GM12878 (cell line): ENCODE measurements at regions of chr3 and their contacts with region 1.

Region 1: GRCh38 chr3:155854141-155854940 is at the start of gene SLC33A1:
- DNase-seq: peak; percentile 97
- ATAC-seq: peak; percentile 95
- H3K4me3 ChIP-seq: peak within 1 kb of the TSS; percentile 84
- H3K27ac ChIP-seq: peak within 1 kb of the TSS; percentile 93
- H3K4me1 ChIP-seq: no peaks in the 10 kb centered on the region
- H3K27me3 ChIP-seq: no peaks in the 10 kb centered on the region
- CTCF ChIP-seq: no peak
- EP300 ChIP-seq: 0 out of 4 replicates have a peak, but pooled peaks have one; percentile 55 to 56
- POLR2A ChIP-seq: peak; percentile 93
- RAD21 ChIP-seq: no peak
- polyA plus RNA-seq, gene SLC33A1: 6.4 to 6.5 TPM

Region 2: DNA sequence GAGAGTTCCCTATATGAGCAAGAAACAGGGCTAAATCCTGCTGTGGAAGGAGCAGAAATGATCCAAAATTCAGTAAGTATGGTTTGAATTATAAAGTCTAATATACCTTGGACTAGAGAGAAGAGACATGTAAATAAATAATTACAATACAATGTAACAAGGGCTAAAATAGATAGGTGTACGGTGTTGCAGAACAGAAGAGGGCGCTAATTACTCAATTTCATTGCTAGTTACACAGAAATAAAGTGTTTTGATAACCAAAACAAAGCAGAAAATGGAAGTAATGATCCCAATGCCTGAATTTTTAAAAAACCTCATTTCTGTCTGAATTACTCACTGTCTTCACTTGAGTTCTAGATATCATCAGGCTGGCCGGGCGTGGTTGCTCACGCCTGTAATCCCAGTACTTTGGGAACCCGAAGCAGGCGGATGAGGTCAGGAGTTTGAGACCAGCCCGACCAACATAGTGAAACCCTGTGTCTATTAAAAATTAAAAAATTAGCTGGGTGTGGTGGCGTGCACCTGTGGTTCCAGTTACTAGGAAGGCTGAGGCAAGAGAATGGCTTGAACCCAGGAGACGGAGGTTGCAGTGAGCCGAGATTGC is 101.2 kb before region 1 on chr3:
- CTCF ChIA-PET with region 1: no interaction called
- POLR2A ChIA-PET with region 1: no interaction called
- RAD21 ChIA-PET with region 1: no interaction called
- SMC1A ChIA-PET with region 1: interaction called, 4 read pairs
- in situ Hi-C with region 1: no loop called
- intact Hi-C with region 1: loop called (anchors 5 kb)
- DNase-seq: no peak
- ATAC-seq: peak; percentile 81
- H3K4me3 ChIP-seq: no peak overlapping the region
- H3K27ac ChIP-seq: no peak overlapping the region
- H3K4me1 ChIP-seq: no peaks in the 10 kb centered on the region
- H3K27me3 ChIP-seq: no peaks in the 10 kb centered on the region
- CTCF ChIP-seq: peak; percentile 36 to 51 (median 42); a peak in 3 of 6 replicates
- EP300 ChIP-seq: no peak
- POLR2A ChIP-seq: no peak
- RAD21 ChIP-seq: peak; percentile 59; the same call in 1 of the 2 replicates

Region 3: GRCh38 chr3:155917781-155918180 is 63.4 kb after region 1 on chr3:
- CTCF ChIA-PET with region 1: no interaction called
- POLR2A ChIA-PET with region 1: no interaction called
- RAD21 ChIA-PET with region 1: no interaction called
- SMC1A ChIA-PET with region 1: no interaction called
- in situ Hi-C with region 1: no loop called
- intact Hi-C with region 1: no loop called
- DNase-seq: no peak
- ATAC-seq: no peak
- H3K4me3 ChIP-seq: no peak overlapping the region
- H3K27ac ChIP-seq: no peak overlapping the region
- H3K4me1 ChIP-seq: no peaks in the 10 kb centered on the region
- H3K27me3 ChIP-seq: no peaks in the 10 kb centered on the region
- CTCF ChIP-seq: no peak
- EP300 ChIP-seq: no peak
- POLR2A ChIP-seq: no peak
- RAD21 ChIP-seq: no peak

Region 4: DNA sequence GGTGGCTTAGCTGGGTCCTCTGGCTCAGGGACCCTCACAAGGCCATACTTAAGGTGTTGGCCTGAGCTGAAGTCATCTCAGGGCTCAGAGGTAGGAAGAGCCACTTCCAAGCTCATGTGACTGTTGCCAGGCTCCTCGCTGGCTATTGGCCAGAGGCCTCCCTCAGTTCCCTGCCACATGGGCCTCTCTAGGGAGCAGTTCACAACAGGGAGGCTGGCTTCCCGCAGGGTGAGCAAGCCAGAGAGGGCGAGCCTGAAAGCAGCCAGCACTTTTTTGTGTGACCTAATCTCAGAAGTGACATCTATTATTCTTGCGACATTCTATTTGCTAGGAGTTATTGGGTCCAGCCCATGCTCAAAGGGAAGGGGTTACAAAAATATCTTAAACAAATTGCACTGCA is 499.2 kb after region 1 on chr3:
- CTCF ChIA-PET with region 1: no interaction called
- POLR2A ChIA-PET with region 1: no interaction called
- RAD21 ChIA-PET with region 1: no interaction called
- SMC1A ChIA-PET with region 1: no interaction called
- in situ Hi-C with region 1: no loop called
- intact Hi-C with region 1: no loop called
- DNase-seq: no peak
- ATAC-seq: no peak
- H3K4me3 ChIP-seq: no peak overlapping the region
- H3K27ac ChIP-seq: no peak overlapping the region
- H3K4me1 ChIP-seq: no peaks in the 10 kb centered on the region
- H3K27me3 ChIP-seq: peaks cover 0 to 2% of the 10 kb centered on the region in 2 experiments; a peak in 2 of 4 replicates
- CTCF ChIP-seq: no peak
- EP300 ChIP-seq: no peak
- POLR2A ChIP-seq: no peak
- RAD21 ChIP-seq: no peak

Region 5: GRCh38 chr3:156760333-156760732 is 906.0 kb after region 1 on chr3:
- CTCF ChIA-PET with region 1: no interaction called
- POLR2A ChIA-PET with region 1: no interaction called
- RAD21 ChIA-PET with region 1: no interaction called
- SMC1A ChIA-PET with region 1: no interaction called
- in situ Hi-C with region 1: no loop called
- intact Hi-C with region 1: no loop called
- DNase-seq: peak; percentile 40
- ATAC-seq: peak; percentile 86
- H3K4me3 ChIP-seq: no peak overlapping the region
- H3K27ac ChIP-seq: peak overlapping the region; percentile 41
- H3K4me1 ChIP-seq: peaks cover 13% of the 10 kb centered on the region; the same call in 1 of the 2 replicates
- H3K27me3 ChIP-seq: no peaks in the 10 kb centered on the region
- CTCF ChIP-seq: no peak
- EP300 ChIP-seq: no peak
- POLR2A ChIP-seq: no peak
- RAD21 ChIP-seq: no peak